SK-N-SH (cell line): ENCODE measurements at regions of chr5 and their contacts with region 1.

Region 1: DNA sequence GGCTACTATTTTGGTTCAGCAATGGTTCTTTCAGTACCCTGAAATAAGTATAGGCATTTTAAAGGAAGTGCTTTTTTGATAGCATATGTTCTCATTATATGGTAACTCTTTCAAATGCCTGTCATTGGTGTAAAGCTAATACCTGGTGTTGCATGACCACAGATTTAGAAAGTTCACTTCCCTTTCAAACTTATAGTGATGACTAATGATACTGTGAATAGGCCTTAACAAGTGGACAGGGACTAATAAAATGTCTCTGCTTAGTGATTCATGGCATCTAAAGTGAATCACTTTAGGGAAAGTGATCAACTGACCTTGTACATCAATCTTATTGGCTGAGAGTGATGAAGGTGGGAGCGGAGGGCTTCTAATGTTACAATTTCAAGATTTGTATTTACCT is 21.6 kb downstream of the MRPL22 start:
- DNase-seq: no peak
- H3K4me3 ChIP-seq: no peak overlapping the region
- H3K27ac ChIP-seq: no peak overlapping the region
- H3K4me1 ChIP-seq: peaks cover 0 to 4% of the 10 kb centered on the region in 2 experiments; a peak in 1 of 4 replicates
- H3K27me3 ChIP-seq: no peaks in the 10 kb centered on the region
- CTCF ChIP-seq: no peak
- EP300 ChIP-seq: no peak
- RAD21 ChIP-seq: no peak

Region 2: DNA sequence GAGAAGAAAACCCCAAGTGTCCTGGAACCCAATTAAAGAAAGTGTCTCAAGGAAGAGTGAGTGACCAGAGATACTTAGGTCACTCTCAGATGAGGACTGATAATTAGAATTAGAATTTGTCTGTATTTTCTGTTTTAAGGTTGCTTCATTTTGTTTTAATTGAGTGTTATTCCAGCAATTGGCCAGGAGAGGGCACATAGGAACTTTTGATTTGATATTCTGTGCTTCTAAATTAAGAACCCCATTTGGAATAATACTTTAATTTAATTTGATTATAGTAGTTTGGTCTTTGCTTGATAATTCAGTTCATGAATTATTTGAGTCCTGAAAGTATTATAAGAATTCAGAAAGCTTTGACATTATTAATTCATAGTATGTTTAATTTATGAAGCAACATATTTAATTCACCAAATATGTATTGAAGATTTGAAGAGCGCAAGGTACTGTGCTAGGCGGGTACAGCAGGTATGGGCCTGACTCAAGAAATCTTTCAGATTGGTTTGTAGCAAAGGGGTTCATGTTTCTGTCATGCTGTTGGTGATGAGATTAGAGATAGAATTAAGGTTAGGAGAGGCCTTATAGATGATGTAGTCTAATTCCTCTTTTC is 16.7 kb before region 1 on chr5:
- CTCF ChIA-PET with region 1: interaction called, 14 read pairs
- POLR2A ChIA-PET with region 1: no interaction called
- DNase-seq: peak; percentile 31
- H3K4me3 ChIP-seq: no peak overlapping the region
- H3K27ac ChIP-seq: no peak overlapping the region
- H3K4me1 ChIP-seq: peaks cover 0 to 7% of the 10 kb centered on the region in 2 experiments; a peak in 1 of 4 replicates
- H3K27me3 ChIP-seq: no peaks in the 10 kb centered on the region
- CTCF ChIP-seq: peak; percentile 75
- EP300 ChIP-seq: no peak
- RAD21 ChIP-seq: peak; percentile 54; the same call in 1 of the 2 replicates

Region 3: DNA sequence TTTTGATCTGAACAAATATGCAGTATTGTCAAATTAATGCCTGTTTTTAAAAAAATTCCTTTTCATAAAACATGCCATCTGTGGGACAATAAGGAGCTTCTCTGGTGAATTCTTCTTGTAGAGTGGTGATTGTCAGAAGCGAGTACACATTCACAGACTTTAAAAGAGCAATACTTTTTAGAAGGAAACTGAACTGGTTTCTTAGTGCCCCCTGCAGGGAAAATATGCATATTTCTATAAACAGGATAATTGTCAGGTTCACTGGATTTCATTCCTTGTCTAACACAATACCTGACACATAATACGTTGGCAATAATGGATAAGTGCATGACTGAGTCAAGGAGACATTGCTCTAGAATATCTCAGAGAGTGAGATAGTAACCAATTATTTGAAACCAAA is 184.7 kb after region 1 on chr5:
- CTCF ChIA-PET with region 1: interaction called, 10 read pairs
- POLR2A ChIA-PET with region 1: no interaction called
- DNase-seq: peak; percentile 25
- H3K4me3 ChIP-seq: no peak overlapping the region
- H3K27ac ChIP-seq: no peak overlapping the region
- H3K4me1 ChIP-seq: no peaks in the 10 kb centered on the region
- H3K27me3 ChIP-seq: no peaks in the 10 kb centered on the region
- CTCF ChIP-seq: peak; percentile 56
- EP300 ChIP-seq: no peak
- RAD21 ChIP-seq: peak; percentile 70